Pancreas (tissue), 10 donors: ENCODE measurements at regions of chr3 and their contacts with region 1.

Region 1: GRCh38 chr3:124230998-124231397 is 239.1 kb upstream of the ROPN1 start:
- DNase-seq: no peak
- ATAC-seq: no peak
- H3K4me3 ChIP-seq: no peak overlapping the region
- H3K27ac ChIP-seq: no peak overlapping the region
- H3K4me1 ChIP-seq: no peaks in the 10 kb centered on the region
- H3K27me3 ChIP-seq: no peaks in the 10 kb centered on the region
- CTCF ChIP-seq: no peak

Region 2: GRCh38 chr3:124174476-124174875 is 56.5 kb before region 1 on chr3:
- intact Hi-C with region 1: loop called in 1 of 3 experiments (anchors 2 kb)
- DNase-seq: peak in 5 of 6 donors; percentile 3 to 30 (median 14)
- ATAC-seq: no peak
- H3K4me3 ChIP-seq: no peak overlapping the region
- H3K27ac ChIP-seq: no peak overlapping the region
- H3K4me1 ChIP-seq: peaks cover 0 to 6% (median 0%) of the 10 kb centered on the region in 3 donors
- H3K27me3 ChIP-seq: no peaks in the 10 kb centered on the region
- CTCF ChIP-seq: no peak